Left ventricle myocardium inferior (tissue), 1 donor: ENCODE measurements at regions of chr11 and their contacts with region 1.

Region 1: DNA sequence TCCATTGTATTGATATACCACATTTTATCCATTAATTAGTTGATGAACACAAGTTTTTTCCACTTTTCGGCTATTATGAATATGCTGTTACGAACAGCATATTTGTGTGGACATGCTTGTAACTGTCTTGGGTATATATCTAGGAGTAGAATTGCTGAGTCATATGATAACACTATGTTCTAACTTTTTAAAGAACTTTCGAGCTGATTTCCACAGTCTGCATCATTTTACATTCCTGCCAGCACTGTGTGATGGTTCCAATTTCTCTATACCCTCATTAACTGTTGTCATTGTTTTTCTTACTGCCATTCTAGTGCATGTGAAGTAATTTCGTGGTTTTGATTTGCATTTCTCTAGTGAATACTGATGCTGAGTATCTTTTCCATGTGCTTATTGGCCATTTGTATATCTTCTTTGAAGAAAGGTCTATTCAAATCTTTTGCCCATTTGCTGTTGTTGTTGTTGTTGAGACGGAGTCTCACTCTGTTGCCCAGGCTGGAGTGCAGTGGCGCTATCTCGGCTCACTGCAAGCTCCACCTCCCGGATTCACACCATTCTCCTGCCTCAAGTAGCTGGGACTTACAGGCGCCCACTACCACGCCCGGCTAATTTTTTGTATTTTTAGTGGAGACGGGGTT is 7.4 kb upstream of the RCE1 start:
- DNase-seq: no peak
- H3K4me3 ChIP-seq: no peak overlapping the region
- H3K27ac ChIP-seq: no peak overlapping the region
- H3K4me1 ChIP-seq: peaks cover 7% of the 10 kb centered on the region
- H3K27me3 ChIP-seq: no peaks in the 10 kb centered on the region
- CTCF ChIP-seq: no peak

Region 2: GRCh38 chr11:66694732-66695207 is 141.1 kb before region 1 on chr11:
- intact Hi-C with region 1: loop called (anchors 2 kb)
- DNase-seq: peak; percentile 81
- H3K4me3 ChIP-seq: no peak overlapping the region
- H3K27ac ChIP-seq: no peak overlapping the region
- H3K4me1 ChIP-seq: peaks cover 8% of the 10 kb centered on the region
- H3K27me3 ChIP-seq: no peaks in the 10 kb centered on the region
- CTCF ChIP-seq: peak; percentile 92

Region 3: DNA sequence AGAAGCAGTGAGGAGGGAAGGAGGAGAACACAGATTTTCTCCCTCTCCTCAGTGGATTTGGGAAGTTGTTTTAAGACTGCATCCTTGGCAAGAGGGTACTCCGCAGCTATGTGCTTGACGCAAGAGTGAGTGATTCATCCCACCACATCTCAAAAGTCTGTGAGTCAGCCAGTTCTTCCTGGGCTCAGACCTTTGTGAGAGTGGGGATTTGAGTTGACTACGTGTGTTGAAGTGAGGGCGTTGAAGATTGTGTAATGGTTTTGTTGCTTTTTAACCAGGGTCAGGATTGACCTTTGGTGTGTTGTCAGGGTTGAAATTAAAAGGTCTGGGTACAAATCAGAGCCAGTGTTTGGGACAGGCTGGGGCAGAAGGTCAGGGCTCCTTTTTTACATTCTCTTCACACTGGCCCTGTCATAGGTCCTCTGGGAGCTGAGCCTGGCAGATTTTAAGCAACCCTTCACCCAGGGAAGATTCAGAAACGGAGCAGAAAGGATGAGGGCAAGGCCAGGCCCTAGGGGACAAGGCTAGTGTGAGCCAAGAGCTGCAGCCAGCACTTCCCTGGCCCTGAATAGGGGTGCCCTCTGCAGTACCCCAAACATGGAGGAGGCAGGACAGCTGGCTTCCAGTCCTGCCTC is 135.0 kb after region 1 on chr11:
- intact Hi-C with region 1: no loop called
- DNase-seq: no peak
- H3K4me3 ChIP-seq: no peak overlapping the region
- H3K27ac ChIP-seq: no peak overlapping the region
- H3K4me1 ChIP-seq: no peaks in the 10 kb centered on the region
- H3K27me3 ChIP-seq: no peaks in the 10 kb centered on the region
- CTCF ChIP-seq: no peak

Region 4: DNA sequence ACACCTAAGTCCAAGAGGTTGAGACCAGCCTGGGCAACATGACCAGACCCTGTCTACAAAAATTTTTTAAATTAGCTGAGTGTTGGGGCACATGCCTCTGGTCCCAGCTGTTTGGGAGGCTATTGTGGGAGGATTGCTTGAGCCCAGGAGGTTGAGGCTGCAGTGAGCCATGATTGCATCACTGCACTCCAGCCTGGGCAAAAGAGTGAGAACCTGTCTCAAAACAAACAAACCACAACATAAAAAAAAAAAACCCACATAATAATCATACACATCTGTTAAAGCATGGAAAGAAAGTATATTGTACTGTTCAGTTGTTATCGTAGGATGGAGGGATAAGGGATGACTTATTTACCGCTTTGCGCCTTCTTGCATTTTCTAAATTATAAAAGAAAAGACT is 394.5 kb after region 1 on chr11:
- intact Hi-C with region 1: no loop called
- DNase-seq: no peak
- H3K4me3 ChIP-seq: no peak overlapping the region
- H3K27ac ChIP-seq: no peak overlapping the region
- H3K4me1 ChIP-seq: no peaks in the 10 kb centered on the region
- H3K27me3 ChIP-seq: no peaks in the 10 kb centered on the region
- CTCF ChIP-seq: no peak